ENCODE measurements at regions of chr1 and their contacts with region 1.

Region 1: DNA sequence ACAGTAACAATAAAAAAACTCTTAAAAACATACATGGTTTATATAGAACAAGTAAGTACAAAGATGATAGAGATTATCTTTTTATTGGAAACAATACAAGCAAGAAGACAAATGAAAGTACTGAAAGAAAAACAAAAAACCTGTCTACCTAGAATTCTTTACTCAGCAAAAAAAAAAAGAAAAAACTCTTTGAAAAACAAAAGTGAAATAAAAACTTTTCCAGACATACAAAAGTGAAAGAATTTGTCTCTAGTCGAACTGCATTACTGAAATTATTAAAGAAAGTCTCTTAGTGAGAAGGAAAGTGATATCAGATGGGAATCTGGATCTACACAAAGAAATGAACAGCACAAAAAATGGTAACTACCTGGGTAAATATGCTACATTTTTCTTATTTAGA is 2.7 kb upstream of the HMCN1 start:
- DNase-seq: no peak
- ATAC-seq: no peak
- H3K4me3 ChIP-seq: no peak overlapping the region
- H3K4me3 Mint-ChIP-seq: no peak overlapping the region
- H3K27ac ChIP-seq: no peak overlapping the region
- H3K27ac Mint-ChIP-seq: no peak overlapping the region
- H3K4me1 ChIP-seq: peaks cover 11% of the 10 kb centered on the region
- H3K4me1 Mint-ChIP-seq: peaks cover 19% of the 10 kb centered on the region
- H3K27me3 ChIP-seq: peaks cover 4 to 10% of the 10 kb centered on the region in 2 experiments
- H3K27me3 Mint-ChIP-seq: peaks cover 41% of the 10 kb centered on the region
- CTCF ChIP-seq: no peak

Region 2: DNA sequence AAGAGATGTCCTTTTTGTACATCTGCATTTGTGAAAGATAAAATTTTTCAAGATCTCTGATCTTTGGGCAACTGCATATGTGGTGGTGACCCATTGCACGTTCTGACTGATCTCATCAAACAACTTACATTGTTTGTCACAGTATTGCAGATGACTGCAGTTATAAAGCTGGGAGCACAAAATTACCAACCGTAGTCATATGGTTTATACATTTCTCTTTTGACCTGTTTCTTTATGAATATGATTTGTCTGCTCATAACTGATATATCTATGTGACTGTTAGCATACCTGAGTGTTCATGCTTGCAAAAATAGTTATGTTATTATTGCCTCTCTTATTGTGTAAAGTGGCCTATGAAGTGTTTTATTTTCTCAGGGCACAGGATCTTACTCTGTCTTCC is 40.9 kb before region 1 on chr1:
- CTCF ChIA-PET with region 1: no interaction called
- POLR2A ChIA-PET with region 1: no interaction called
- intact Hi-C with region 1: no loop called
- DNase-seq: no peak
- ATAC-seq: no peak
- H3K4me3 ChIP-seq: no peak overlapping the region
- H3K4me3 Mint-ChIP-seq: no peak overlapping the region
- H3K27ac ChIP-seq: no peak overlapping the region
- H3K27ac Mint-ChIP-seq: no peak overlapping the region
- H3K4me1 ChIP-seq: peaks cover 18% of the 10 kb centered on the region
- H3K4me1 Mint-ChIP-seq: peaks cover 23% of the 10 kb centered on the region
- H3K27me3 ChIP-seq: no peaks in the 10 kb centered on the region
- H3K27me3 Mint-ChIP-seq: no peaks in the 10 kb centered on the region
- CTCF ChIP-seq: no peak

Region 3: DNA sequence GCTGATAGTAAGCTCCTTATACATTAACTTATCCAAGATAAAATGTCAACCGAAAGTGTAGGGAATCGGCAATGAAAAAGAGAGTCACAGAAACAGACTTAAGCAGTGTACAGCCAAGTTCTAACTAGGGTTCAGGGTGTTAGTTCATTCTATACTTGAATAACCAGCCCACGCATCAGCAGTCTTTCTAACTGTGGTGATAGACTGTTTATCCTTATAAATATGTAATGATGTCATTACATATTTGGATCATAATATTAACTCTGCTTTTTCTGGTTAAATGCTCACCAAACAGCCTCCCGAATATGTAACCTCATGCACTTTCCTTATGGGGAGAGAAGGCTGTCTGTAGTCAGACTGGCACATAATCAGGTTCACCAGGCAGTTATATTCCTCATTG is 13.7 kb after region 1 on chr1:
- CTCF ChIA-PET with region 1: no interaction called
- POLR2A ChIA-PET with region 1: no interaction called
- intact Hi-C with region 1: loop called in 1 of 2 experiments (anchors 2 kb)
- DNase-seq: no peak
- ATAC-seq: no peak
- H3K4me3 ChIP-seq: no peak overlapping the region
- H3K4me3 Mint-ChIP-seq: no peak overlapping the region
- H3K27ac ChIP-seq: no peak overlapping the region
- H3K27ac Mint-ChIP-seq: no peak overlapping the region
- H3K4me1 ChIP-seq: no peaks in the 10 kb centered on the region
- H3K4me1 Mint-ChIP-seq: no peaks in the 10 kb centered on the region
- H3K27me3 ChIP-seq: peaks cover 2 to 3% of the 10 kb centered on the region in 2 experiments
- H3K27me3 Mint-ChIP-seq: peaks cover 10% of the 10 kb centered on the region
- CTCF ChIP-seq: no peak

Region 4: GRCh38 chr1:185846672-185847444 is 115.4 kb after region 1 on chr1:
- CTCF ChIA-PET with region 1: no interaction called
- POLR2A ChIA-PET with region 1: no interaction called
- intact Hi-C with region 1: no loop called
- DNase-seq: no peak
- ATAC-seq: no peak
- H3K4me3 ChIP-seq: no peak overlapping the region
- H3K4me3 Mint-ChIP-seq: no peak overlapping the region
- H3K27ac ChIP-seq: no peak overlapping the region
- H3K27ac Mint-ChIP-seq: no peak overlapping the region
- H3K4me1 ChIP-seq: no peaks in the 10 kb centered on the region
- H3K4me1 Mint-ChIP-seq: no peaks in the 10 kb centered on the region
- H3K27me3 ChIP-seq: no peaks in the 10 kb centered on the region
- H3K27me3 Mint-ChIP-seq: peaks cover 6% of the 10 kb centered on the region
- CTCF ChIP-seq: no peak